HepG2 (cell line): ENCODE measurements at regions of chr9 and their contacts with region 1.

Region 1: DNA sequence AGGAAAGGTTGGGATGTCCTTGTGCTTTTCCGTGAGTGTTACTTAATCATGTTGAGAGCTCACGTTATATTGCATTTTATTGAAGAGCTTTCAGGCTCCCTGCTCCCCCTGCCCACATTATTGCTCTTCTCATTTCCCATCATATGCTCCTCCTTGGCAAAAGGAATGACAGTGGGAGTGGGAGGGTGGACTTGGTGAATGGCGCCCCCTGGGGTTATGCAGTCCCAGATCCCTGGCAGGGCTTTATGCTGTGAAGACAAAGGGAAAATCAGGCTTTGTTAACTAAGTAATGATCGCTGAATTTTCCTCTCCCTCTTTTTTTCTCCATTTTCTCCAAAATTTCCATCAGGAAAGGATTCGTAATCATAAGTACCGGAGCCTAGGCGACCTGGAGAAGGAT is 166.6 kb downstream of the SMARCA2 start:
- DNase-seq: no peak
- ATAC-seq: peak; percentile 86
- H3K4me3 ChIP-seq: no peak overlapping the region
- H3K27ac ChIP-seq: no peak overlapping the region
- H3K4me1 ChIP-seq: peaks cover 9% of the 10 kb centered on the region
- H3K27me3 ChIP-seq: no peaks in the 10 kb centered on the region
- CTCF ChIP-seq: peak; percentile 61
- EP300 ChIP-seq: no peak
- POLR2A ChIP-seq: no peak
- RAD21 ChIP-seq: no peak

Region 2: GRCh38 chr9:2132484-2133082 is 49.2 kb before region 1 on chr9:
- CTCF ChIA-PET with region 1: interaction called, 8 read pairs
- POLR2A ChIA-PET with region 1: no interaction called
- in situ Hi-C with region 1: no loop called
- intact Hi-C with region 1: loop called (anchors 1 kb)
- DNase-seq: no peak
- ATAC-seq: no peak
- H3K4me3 ChIP-seq: no peak overlapping the region
- H3K27ac ChIP-seq: no peak overlapping the region
- H3K4me1 ChIP-seq: no peaks in the 10 kb centered on the region
- H3K27me3 ChIP-seq: no peaks in the 10 kb centered on the region
- CTCF ChIP-seq: peak; percentile 38
- EP300 ChIP-seq: no peak
- POLR2A ChIP-seq: no peak
- RAD21 ChIP-seq: peak; percentile 31; the same call in 1 of the 2 replicates

Region 3: DNA sequence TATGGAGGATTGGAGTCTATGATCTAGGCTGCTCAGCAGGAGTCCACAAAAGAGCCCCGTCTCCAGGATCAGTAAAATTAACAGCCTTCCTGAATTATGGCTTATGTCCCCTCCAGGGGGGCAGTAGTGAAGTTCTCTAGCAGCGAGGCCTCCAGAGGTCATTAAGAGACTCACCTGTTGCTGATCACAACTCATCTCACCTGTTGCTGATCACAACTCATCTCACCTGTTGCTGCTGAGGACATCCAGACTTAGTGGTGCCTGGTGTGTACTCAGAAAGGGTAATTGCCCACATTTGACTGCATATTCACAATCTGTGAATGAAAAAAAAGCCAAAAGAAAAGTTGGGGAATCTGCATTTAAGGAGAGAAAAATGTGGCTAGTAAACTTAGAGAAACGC is 37.2 kb before region 1 on chr9:
- CTCF ChIA-PET with region 1: no interaction called
- POLR2A ChIA-PET with region 1: no interaction called
- in situ Hi-C with region 1: no loop called
- intact Hi-C with region 1: loop called (anchors 5 kb)
- DNase-seq: no peak
- ATAC-seq: no peak
- H3K4me3 ChIP-seq: no peak overlapping the region
- H3K27ac ChIP-seq: no peak overlapping the region
- H3K4me1 ChIP-seq: no peaks in the 10 kb centered on the region
- H3K27me3 ChIP-seq: no peaks in the 10 kb centered on the region
- CTCF ChIP-seq: no peak
- EP300 ChIP-seq: no peak
- POLR2A ChIP-seq: no peak
- RAD21 ChIP-seq: no peak

Region 4: DNA sequence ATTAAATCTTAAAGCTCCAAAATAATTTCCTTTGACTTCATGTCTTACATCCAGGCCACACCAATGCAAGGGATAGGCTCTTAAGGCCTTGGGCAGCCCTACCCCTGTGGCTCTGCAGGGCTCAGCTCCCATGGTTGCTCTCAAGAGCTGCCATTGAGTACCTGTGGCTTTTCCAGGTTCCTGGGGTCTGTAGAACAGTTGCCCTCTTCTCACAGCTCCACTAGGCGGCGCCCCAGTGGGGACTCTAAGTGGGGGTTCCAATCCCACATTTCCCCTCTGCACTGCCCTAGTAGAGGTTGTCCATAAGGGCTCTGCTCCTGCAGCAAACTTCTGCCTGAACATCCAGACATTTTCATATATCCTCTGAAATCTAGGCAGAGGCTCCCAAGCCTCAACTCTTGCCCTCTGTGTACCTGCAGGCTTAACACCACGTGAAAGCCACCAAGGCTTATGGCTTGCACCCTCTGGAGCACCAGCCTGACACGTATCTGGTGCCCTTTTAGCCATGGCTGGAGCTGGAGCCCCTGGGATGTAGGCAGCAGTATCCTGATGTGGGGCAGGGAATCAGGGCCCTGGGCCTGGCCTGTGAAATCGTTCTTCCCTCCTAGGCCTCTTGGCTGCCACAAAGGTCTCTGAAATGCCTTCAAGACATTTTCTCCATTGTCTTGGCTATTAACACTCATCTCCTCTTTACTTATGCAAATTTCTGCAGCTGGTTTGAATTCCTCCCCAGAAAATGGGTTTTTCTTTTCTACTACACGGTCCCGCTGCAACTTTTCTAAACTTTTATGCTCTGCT is 18.4 kb after region 1 on chr9:
- CTCF ChIA-PET with region 1: no interaction called
- POLR2A ChIA-PET with region 1: no interaction called
- in situ Hi-C with region 1: no loop called
- intact Hi-C with region 1: no loop called
- DNase-seq: no peak
- ATAC-seq: peak; percentile 54
- H3K4me3 ChIP-seq: no peak overlapping the region
- H3K27ac ChIP-seq: no peak overlapping the region
- H3K4me1 ChIP-seq: no peaks in the 10 kb centered on the region
- H3K27me3 ChIP-seq: no peaks in the 10 kb centered on the region
- CTCF ChIP-seq: no peak
- EP300 ChIP-seq: no peak
- POLR2A ChIP-seq: no peak
- RAD21 ChIP-seq: no peak

Region 5: DNA sequence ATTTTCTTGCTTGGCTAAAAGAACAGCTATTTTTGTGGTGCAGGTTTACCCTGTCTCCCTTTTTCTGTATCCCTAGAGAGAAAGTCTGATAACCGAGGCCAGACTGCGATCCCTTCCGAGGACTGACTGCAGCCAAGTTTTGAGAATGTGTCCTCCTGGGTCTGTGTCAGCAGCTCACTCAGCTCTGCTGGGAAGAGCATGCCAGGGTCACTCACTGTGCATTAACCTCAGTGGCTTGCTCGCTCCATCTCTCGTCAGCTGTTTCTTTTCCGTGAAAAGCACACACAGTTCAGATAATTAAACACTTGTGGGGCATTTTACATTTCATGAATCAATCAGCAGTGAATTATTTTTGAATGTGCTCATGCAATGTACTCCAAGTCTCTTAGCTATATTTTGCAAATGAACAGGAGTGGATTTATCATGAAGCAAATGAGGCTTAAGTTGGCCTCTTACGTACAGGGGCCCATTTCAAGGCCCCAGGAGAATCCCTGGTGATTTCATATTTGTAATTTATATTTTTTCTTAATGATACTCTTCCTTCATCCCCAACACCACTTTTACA is 85.5 kb after region 1 on chr9:
- CTCF ChIA-PET with region 1: no interaction called
- POLR2A ChIA-PET with region 1: no interaction called
- in situ Hi-C with region 1: no loop called
- intact Hi-C with region 1: no loop called
- DNase-seq: no peak
- ATAC-seq: no peak
- H3K4me3 ChIP-seq: no peak overlapping the region
- H3K27ac ChIP-seq: no peak overlapping the region
- H3K4me1 ChIP-seq: no peaks in the 10 kb centered on the region
- H3K27me3 ChIP-seq: no peaks in the 10 kb centered on the region; a peak in 3 of 5 replicates
- CTCF ChIP-seq: no peak
- EP300 ChIP-seq: no peak
- POLR2A ChIP-seq: no peak
- RAD21 ChIP-seq: no peak

Region 6: GRCh38 chr9:2356041-2356790 is 174.4 kb after region 1 on chr9:
- CTCF ChIA-PET with region 1: no interaction called
- POLR2A ChIA-PET with region 1: no interaction called
- in situ Hi-C with region 1: no loop called
- intact Hi-C with region 1: no loop called
- DNase-seq: no peak
- ATAC-seq: no peak
- H3K4me3 ChIP-seq: no peak overlapping the region
- H3K27ac ChIP-seq: no peak overlapping the region
- H3K4me1 ChIP-seq: no peaks in the 10 kb centered on the region
- H3K27me3 ChIP-seq: peaks cover 0 to 4% of the 10 kb centered on the region in 2 experiments; a peak in 1 of 5 replicates
- CTCF ChIP-seq: no peak
- EP300 ChIP-seq: no peak
- POLR2A ChIP-seq: no peak
- RAD21 ChIP-seq: no peak